ENCODE measurements at regions of chr2 and their contacts with region 1.

Region 1: GRCh38 chr2:118875316-118875715 is 27.9 kb upstream of the EN1 start:
- DNase-seq: no peak
- ATAC-seq: no peak
- H3K4me3 ChIP-seq: no peak overlapping the region
- H3K27ac ChIP-seq: no peak overlapping the region
- H3K4me1 ChIP-seq: no peaks in the 10 kb centered on the region
- H3K27me3 ChIP-seq: peaks cover 16% of the 10 kb centered on the region
- CTCF ChIP-seq: no peak

Region 2: GRCh38 chr2:118847497-118848172 is 27.7 kb before region 1 on chr2 and contains the start of gene EN1:
- CTCF ChIA-PET with region 1: no interaction called
- POLR2A ChIA-PET with region 1: no interaction called
- in situ Hi-C with region 1: no loop called
- intact Hi-C with region 1: no loop called
- DNase-seq: no peak
- ATAC-seq: peak; percentile 69
- H3K4me3 ChIP-seq: peak within 1 kb of the TSS; percentile 37 to 45
- H3K27ac ChIP-seq: no peak within 1 kb of the TSS
- H3K4me1 ChIP-seq: no peaks in the 10 kb centered on the region; the same call in 1 of the 2 replicates
- H3K27me3 ChIP-seq: peaks cover 7% of the 10 kb centered on the region; the same call in 1 of the 2 replicates
- CTCF ChIP-seq: no peak
- total RNA-seq, gene EN1: 0.26 TPM

Region 3: GRCh38 chr2:119311356-119311755 is 436.0 kb after region 1 on chr2:
- CTCF ChIA-PET with region 1: interaction called, 21 read pairs
- POLR2A ChIA-PET with region 1: interaction called, 6 read pairs
- in situ Hi-C with region 1: no loop called
- intact Hi-C with region 1: no loop called
- DNase-seq: no peak
- ATAC-seq: no peak
- H3K4me3 ChIP-seq: no peak overlapping the region
- H3K27ac ChIP-seq: no peak overlapping the region
- H3K4me1 ChIP-seq: no peaks in the 10 kb centered on the region
- H3K27me3 ChIP-seq: no peaks in the 10 kb centered on the region
- CTCF ChIP-seq: no peak